ENCODE measurements at regions of chr17 and their contacts with region 1.

Region 1: GRCh38 chr17:66567234-66568170 is 265.1 kb downstream of the PRKCA start:
- DNase-seq: peak; percentile 53 to 76 (median 66)
- H3K4me3 ChIP-seq: no peak overlapping the region
- H3K4me3 Mint-ChIP-seq: no peak overlapping the region
- H3K27ac ChIP-seq: no peak overlapping the region
- H3K27ac Mint-ChIP-seq: peak overlapping the region in 2 of 8 donors; percentile 22 to 69
- H3K4me1 ChIP-seq: no peaks in the 10 kb centered on the region
- H3K4me1 Mint-ChIP-seq: peaks cover 5 to 24% (median 14%) of the 10 kb centered on the region in 3 donors
- H3K27me3 ChIP-seq: no peaks in the 10 kb centered on the region
- H3K27me3 Mint-ChIP-seq: no peaks in the 10 kb centered on the region

Region 2: DNA sequence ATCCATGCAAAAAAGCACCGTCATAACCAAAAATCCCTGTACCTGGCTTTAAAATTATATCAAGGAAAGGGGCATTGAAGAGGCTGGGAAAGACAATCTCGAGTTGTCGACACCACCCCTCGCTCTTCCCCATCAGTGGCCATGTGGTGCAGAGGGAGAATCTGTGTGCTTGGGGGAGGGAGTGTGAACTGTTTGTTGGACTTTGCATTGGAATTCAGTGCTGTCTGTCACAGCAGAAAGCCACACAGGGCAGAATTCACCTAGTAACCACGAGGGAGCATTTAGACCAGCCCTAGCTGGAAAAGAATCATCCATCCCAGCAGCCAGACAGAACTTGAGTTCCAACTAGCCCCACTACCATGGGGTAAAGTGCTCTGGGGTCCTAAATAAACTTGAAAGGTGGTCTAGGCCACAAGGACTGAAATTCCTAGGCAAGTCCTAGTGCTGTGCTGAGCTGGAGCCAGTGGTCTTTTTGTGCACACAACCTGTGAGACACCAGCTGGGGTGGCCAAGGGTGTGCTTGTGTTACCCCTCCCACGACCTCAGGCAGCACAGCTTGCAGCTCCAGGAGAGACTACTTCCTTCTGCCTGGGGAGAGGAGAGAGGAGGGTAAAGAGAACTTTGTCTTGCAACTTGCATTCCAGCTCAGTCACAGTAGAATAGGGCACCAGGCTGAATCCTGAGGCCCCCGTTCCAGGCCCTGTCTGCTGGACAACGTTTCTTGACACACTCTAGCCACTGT is 364.1 kb before region 1 on chr17:
- CTCF ChIA-PET with region 1: interaction called, 13 read pairs
- POLR2A ChIA-PET with region 1: no interaction called
- DNase-seq: no peak
- H3K4me3 ChIP-seq: no peak overlapping the region
- H3K4me3 Mint-ChIP-seq: no peak overlapping the region
- H3K27ac ChIP-seq: no peak overlapping the region
- H3K27ac Mint-ChIP-seq: peak overlapping the region in 1 of 8 donors; percentile 61
- H3K4me1 ChIP-seq: peaks cover 16% of the 10 kb centered on the region
- H3K4me1 Mint-ChIP-seq: peaks cover 13 to 21% (median 19%) of the 10 kb centered on the region in 3 donors
- H3K27me3 ChIP-seq: no peaks in the 10 kb centered on the region
- H3K27me3 Mint-ChIP-seq: peaks cover 0 to 5% of the 10 kb centered on the region in 2 donors

Region 3: DNA sequence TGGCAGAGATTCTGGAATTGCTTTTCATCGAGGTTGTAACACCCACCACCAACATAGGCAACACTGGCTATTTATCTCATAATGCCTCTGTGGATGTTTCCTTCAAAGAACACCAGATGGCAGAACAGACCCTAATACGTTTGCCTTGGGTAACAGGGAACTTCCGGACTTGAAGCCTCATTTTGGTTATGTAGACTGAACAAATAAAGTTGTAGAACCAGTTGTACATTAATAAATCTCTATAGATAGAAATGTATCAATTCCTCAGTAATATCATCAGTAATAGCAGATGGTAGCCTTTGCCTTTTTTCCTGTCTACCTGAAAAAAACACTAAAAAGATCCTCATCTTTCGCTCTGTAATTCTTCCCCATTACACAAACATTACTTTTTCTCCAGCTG is 312.4 kb before region 1 on chr17:
- CTCF ChIA-PET with region 1: interaction called, 16 read pairs
- POLR2A ChIA-PET with region 1: no interaction called
- DNase-seq: peak in 4 of 5 donors; percentile 9 to 70 (median 54)
- H3K4me3 ChIP-seq: peak overlapping the region; percentile 19
- H3K4me3 Mint-ChIP-seq: peak overlapping the region in 5 of 7 donors; percentile 27 to 65 (median 53)
- H3K27ac ChIP-seq: no peak overlapping the region
- H3K27ac Mint-ChIP-seq: peak overlapping the region in 6 of 8 donors; percentile 13 to 89 (median 77)
- H3K4me1 ChIP-seq: peaks cover 15% of the 10 kb centered on the region
- H3K4me1 Mint-ChIP-seq: peaks cover 11 to 19% (median 12%) of the 10 kb centered on the region in 3 donors
- H3K27me3 ChIP-seq: no peaks in the 10 kb centered on the region
- H3K27me3 Mint-ChIP-seq: no peaks in the 10 kb centered on the region

Region 4: GRCh38 chr17:66420961-66421371 is 146.5 kb before region 1 on chr17:
- CTCF ChIA-PET with region 1: no interaction called
- POLR2A ChIA-PET with region 1: no interaction called
- DNase-seq: no peak
- H3K4me3 ChIP-seq: no peak overlapping the region
- H3K4me3 Mint-ChIP-seq: no peak overlapping the region
- H3K27ac ChIP-seq: no peak overlapping the region
- H3K27ac Mint-ChIP-seq: no peak overlapping the region
- H3K4me1 ChIP-seq: peaks cover 19% of the 10 kb centered on the region
- H3K4me1 Mint-ChIP-seq: peaks cover 14 to 28% (median 25%) of the 10 kb centered on the region in 3 donors
- H3K27me3 ChIP-seq: no peaks in the 10 kb centered on the region
- H3K27me3 Mint-ChIP-seq: no peaks in the 10 kb centered on the region

Measured in CD8-positive, alpha-beta memory T cell (primary cell).